SK-N-SH (cell line): ENCODE measurements at regions of chr21 and their contacts with region 1.

Region 1: DNA sequence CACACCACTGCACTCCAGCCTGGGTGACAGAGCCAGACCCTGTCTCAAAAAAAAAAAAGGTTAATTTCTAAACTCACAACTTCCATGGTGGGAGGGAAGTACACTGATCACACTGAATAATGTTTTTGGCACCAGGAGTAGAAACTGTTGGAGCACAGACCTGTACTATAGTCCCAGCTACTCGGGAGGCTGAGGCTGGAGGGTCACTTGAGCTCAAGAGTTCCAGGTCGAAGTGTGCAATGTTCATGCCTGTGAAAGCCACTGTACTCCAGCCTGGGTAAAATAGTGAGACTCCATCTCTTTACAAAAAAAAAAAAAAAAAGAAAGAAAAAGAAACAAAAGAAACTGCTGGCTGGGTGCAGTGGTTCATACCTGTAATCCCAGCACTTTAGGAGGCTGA is 35.3 kb downstream of the TMEM50B start:
- DNase-seq: no peak
- H3K4me3 ChIP-seq: no peak overlapping the region
- H3K27ac ChIP-seq: no peak overlapping the region
- H3K4me1 ChIP-seq: no peaks in the 10 kb centered on the region; a peak in 1 of 4 replicates
- H3K27me3 ChIP-seq: no peaks in the 10 kb centered on the region
- CTCF ChIP-seq: no peak
- EP300 ChIP-seq: no peak
- RAD21 ChIP-seq: no peak

Region 2: DNA sequence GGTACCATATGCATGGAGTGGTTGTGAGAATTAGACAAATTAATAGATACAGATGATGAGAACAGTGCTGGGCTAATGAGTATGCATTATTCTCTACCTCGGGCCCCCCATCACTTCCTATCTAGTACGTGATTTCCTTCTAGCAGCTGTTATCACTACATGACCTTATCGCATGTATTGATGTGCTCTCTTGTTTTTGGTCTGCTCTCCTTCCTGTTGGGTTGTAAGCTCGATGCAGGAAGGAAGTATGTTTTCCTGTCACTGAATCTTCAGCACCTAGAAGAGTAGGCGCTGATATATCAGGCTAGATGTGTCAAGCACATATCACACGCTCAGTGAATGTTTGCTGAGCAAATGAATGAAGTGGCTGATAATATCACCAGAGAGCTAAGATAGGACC is 258.6 kb before region 1 on chr21:
- CTCF ChIA-PET with region 1: no interaction called
- POLR2A ChIA-PET with region 1: no interaction called
- DNase-seq: no peak
- H3K4me3 ChIP-seq: no peak overlapping the region
- H3K27ac ChIP-seq: no peak overlapping the region
- H3K4me1 ChIP-seq: no peaks in the 10 kb centered on the region
- H3K27me3 ChIP-seq: peaks cover 34% of the 10 kb centered on the region; the same call in 1 of the 2 replicates
- CTCF ChIP-seq: no peak
- EP300 ChIP-seq: no peak
- RAD21 ChIP-seq: no peak

Region 3: GRCh38 chr21:33455686-33456446 is 11.4 kb after region 1 on chr21:
- CTCF ChIA-PET with region 1: interaction called, 25 read pairs
- POLR2A ChIA-PET with region 1: no interaction called
- DNase-seq: no peak
- H3K4me3 ChIP-seq: no peak overlapping the region
- H3K27ac ChIP-seq: no peak overlapping the region
- H3K4me1 ChIP-seq: peaks cover 0 to 11% of the 10 kb centered on the region in 2 experiments; a peak in 1 of 4 replicates
- H3K27me3 ChIP-seq: no peaks in the 10 kb centered on the region
- CTCF ChIP-seq: no peak
- EP300 ChIP-seq: no peak
- RAD21 ChIP-seq: no peak